Activated CD8-positive, alpha-beta T cell treated with anti-CD3 and anti-CD28 coated beads, Interleukin-2, amount 10 ng/mL, durations not matched to agents 7 days and 5 days (primary cell): ENCODE measurements at regions of chr17 and their contacts with region 1.

Region 1: GRCh38 chr17:72725433-72726068 is 366.9 kb downstream of the SLC39A11 start:
- DNase-seq: peak; percentile 66
- ATAC-seq: peak; percentile 42
- H3K4me3 Mint-ChIP-seq: no peak overlapping the region
- H3K27ac Mint-ChIP-seq: peak overlapping the region; percentile 80
- H3K4me1 Mint-ChIP-seq: peaks cover 61% of the 10 kb centered on the region
- H3K27me3 Mint-ChIP-seq: no peaks in the 10 kb centered on the region

Region 2: GRCh38 chr17:72592242-72592966 is 133.1 kb before region 1 on chr17:
- CTCF ChIA-PET with region 1: interaction called, 19 read pairs
- POLR2A ChIA-PET with region 1: interaction called, 10 read pairs
- DNase-seq: peak; percentile 74
- ATAC-seq: peak; percentile 90
- H3K4me3 Mint-ChIP-seq: peak overlapping the region; percentile 81
- H3K27ac Mint-ChIP-seq: no peak overlapping the region
- H3K4me1 Mint-ChIP-seq: peaks cover 27% of the 10 kb centered on the region
- H3K27me3 Mint-ChIP-seq: peaks cover 69% of the 10 kb centered on the region

Region 3: GRCh38 chr17:72985881-72986720 is 260.6 kb after region 1 on chr17:
- CTCF ChIA-PET with region 1: interaction called, 46 read pairs
- POLR2A ChIA-PET with region 1: no interaction called
- DNase-seq: peak; percentile 69
- ATAC-seq: peak; percentile 81
- H3K4me3 Mint-ChIP-seq: no peak overlapping the region
- H3K27ac Mint-ChIP-seq: no peak overlapping the region
- H3K4me1 Mint-ChIP-seq: no peaks in the 10 kb centered on the region
- H3K27me3 Mint-ChIP-seq: no peaks in the 10 kb centered on the region

Region 4: DNA sequence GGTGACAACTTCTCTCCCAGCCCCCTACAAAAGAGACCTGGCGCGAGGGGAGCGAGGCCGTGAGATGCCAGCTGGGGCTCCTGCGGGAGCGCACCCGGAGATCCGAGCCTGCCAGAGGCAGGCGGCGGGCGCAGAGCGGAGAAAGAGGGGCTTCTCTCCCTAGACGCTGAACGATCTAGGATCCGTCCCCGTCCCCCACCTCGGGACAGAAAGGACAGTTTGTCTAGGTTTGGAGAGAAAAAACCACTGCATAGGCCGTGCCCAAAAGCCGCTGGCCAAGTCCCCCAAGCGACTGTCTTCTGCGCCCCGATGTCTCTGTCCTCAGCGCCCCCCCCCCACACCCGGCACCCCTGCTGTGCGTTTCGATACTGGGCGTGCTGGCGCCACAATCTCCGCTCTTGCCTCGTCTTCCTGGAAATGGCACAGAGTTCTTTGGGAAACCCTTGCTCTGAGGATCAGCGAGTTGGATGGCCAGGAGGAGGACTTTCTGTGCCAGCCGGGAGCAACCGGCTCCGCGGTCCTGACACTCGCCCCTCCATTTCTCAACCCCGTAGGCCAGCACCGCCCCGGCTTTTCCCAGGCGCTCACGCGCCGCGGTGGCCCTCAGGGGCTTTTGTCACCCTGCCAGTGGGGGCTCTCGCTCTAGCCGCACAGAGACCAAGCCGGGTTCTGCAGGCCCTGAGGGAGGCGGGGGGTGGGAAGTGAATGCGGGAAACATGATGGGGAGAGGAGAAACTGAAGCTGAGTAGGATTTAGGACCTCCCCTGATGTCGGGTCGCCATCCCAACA is 440.3 kb after region 1 on chr17:
- CTCF ChIA-PET with region 1: interaction called, 21 read pairs
- POLR2A ChIA-PET with region 1: no interaction called
- DNase-seq: no peak
- ATAC-seq: peak; percentile 31
- H3K4me3 Mint-ChIP-seq: peak overlapping the region; percentile 58
- H3K27ac Mint-ChIP-seq: no peak overlapping the region
- H3K4me1 Mint-ChIP-seq: peaks cover 28% of the 10 kb centered on the region
- H3K27me3 Mint-ChIP-seq: peaks cover 58% of the 10 kb centered on the region

Region 5: GRCh38 chr17:73231841-73232586 is 506.5 kb after region 1 on chr17:
- CTCF ChIA-PET with region 1: interaction called, 23 read pairs
- POLR2A ChIA-PET with region 1: interaction called, 5 read pairs
- DNase-seq: peak; percentile 97
- ATAC-seq: peak; percentile 92
- H3K4me3 Mint-ChIP-seq: peak overlapping the region; percentile 82
- H3K27ac Mint-ChIP-seq: peak overlapping the region; percentile 96
- H3K4me1 Mint-ChIP-seq: peaks cover 57% of the 10 kb centered on the region
- H3K27me3 Mint-ChIP-seq: no peaks in the 10 kb centered on the region

Region 6: GRCh38 chr17:73371285-73371684 is 645.7 kb after region 1 on chr17:
- CTCF ChIA-PET with region 1: interaction called, 123 read pairs
- POLR2A ChIA-PET with region 1: no interaction called
- DNase-seq: no peak
- ATAC-seq: no peak
- H3K4me3 Mint-ChIP-seq: no peak overlapping the region
- H3K27ac Mint-ChIP-seq: no peak overlapping the region
- H3K4me1 Mint-ChIP-seq: no peaks in the 10 kb centered on the region
- H3K27me3 Mint-ChIP-seq: peaks cover 4% of the 10 kb centered on the region